Activated CD4-positive, alpha-beta memory T cell treated with anti-CD3 and anti-CD28 coated beads for 36 hours (primary cell): ENCODE measurements at regions of chr1 and their contacts with region 1.

Region 1: DNA sequence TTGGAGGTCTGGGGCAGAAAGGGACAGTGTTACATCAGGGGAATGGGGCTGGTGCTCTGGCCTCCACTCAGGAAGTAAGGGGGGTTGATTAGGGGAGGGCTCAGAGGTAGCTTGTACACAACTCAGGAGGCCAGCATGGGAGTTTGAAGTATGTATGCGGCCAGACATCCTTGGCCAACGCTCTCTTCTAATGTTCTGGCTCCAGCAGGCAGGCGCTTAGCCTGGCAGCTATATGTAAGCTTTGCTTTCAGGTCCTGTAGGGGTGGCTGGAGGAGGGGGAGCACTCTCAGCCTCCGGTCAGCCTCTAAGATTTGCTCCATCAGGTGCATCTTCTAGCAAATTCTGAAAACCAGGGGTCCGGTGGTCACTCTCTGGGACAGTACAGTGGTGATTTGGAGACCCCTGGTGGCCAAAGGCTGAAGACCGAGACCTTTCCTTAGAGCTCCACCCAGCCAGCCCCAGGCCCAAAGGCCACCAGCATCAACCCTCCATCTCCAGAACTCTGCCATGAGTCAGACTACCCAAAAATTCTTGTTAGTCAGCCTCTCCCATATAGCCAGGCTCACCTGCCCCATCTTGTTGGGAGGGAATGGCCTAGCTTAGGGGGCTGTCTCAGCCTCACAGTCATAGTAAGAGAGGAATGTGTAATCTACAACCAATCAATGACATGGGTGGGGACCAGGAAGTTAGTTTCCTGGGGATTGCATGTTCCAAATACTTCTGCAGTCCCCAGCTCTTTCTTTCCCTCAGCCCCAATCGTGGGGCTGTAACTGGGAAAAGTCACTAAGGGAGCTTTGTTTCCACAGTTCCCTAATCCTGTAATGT is 9.7 kb upstream of the COL8A2 start:
- DNase-seq: peak; percentile 57
- H3K4me3 Mint-ChIP-seq: no peak overlapping the region
- H3K27ac Mint-ChIP-seq: no peak overlapping the region
- H3K4me1 Mint-ChIP-seq: peaks cover 3% of the 10 kb centered on the region
- H3K27me3 Mint-ChIP-seq: no peaks in the 10 kb centered on the region

Region 2: GRCh38 chr1:36099681-36100341 is 34.9 kb before region 1 on chr1:
- CTCF ChIA-PET with region 1: interaction called, 52 read pairs
- POLR2A ChIA-PET with region 1: no interaction called
- intact Hi-C with region 1: loop called (anchors 1 kb)
- DNase-seq: peak; percentile 84
- H3K4me3 Mint-ChIP-seq: no peak overlapping the region
- H3K27ac Mint-ChIP-seq: no peak overlapping the region
- H3K4me1 Mint-ChIP-seq: no peaks in the 10 kb centered on the region
- H3K27me3 Mint-ChIP-seq: no peaks in the 10 kb centered on the region

Region 3: DNA sequence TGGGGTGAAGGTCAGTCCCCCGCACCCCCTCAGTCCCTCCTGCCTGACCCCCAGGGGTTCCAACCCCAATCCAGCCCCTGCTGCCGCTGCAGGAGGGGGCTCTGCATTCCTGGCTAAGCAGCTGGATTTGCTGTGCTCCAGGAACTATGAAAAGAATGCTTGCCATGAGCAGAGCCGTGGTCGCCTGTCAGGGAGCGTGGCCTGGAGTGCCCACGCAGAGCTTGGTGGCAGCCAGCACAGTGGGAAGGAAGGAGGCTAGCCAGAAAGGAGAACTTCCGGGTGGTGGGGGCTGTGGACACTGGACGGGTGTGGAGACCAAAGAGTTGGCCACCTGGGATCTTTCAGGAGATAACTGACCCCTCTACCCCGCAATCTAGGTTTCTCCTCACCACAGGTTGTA is 15.3 kb before region 1 on chr1:
- CTCF ChIA-PET with region 1: interaction called, 20 read pairs
- POLR2A ChIA-PET with region 1: no interaction called
- intact Hi-C with region 1: no loop called
- DNase-seq: no peak
- H3K4me3 Mint-ChIP-seq: no peak overlapping the region
- H3K27ac Mint-ChIP-seq: no peak overlapping the region
- H3K4me1 Mint-ChIP-seq: peaks cover 7% of the 10 kb centered on the region
- H3K27me3 Mint-ChIP-seq: peaks cover 27% of the 10 kb centered on the region